ENCODE measurements at regions of chr14 and their contacts with region 1.

Region 1: DNA sequence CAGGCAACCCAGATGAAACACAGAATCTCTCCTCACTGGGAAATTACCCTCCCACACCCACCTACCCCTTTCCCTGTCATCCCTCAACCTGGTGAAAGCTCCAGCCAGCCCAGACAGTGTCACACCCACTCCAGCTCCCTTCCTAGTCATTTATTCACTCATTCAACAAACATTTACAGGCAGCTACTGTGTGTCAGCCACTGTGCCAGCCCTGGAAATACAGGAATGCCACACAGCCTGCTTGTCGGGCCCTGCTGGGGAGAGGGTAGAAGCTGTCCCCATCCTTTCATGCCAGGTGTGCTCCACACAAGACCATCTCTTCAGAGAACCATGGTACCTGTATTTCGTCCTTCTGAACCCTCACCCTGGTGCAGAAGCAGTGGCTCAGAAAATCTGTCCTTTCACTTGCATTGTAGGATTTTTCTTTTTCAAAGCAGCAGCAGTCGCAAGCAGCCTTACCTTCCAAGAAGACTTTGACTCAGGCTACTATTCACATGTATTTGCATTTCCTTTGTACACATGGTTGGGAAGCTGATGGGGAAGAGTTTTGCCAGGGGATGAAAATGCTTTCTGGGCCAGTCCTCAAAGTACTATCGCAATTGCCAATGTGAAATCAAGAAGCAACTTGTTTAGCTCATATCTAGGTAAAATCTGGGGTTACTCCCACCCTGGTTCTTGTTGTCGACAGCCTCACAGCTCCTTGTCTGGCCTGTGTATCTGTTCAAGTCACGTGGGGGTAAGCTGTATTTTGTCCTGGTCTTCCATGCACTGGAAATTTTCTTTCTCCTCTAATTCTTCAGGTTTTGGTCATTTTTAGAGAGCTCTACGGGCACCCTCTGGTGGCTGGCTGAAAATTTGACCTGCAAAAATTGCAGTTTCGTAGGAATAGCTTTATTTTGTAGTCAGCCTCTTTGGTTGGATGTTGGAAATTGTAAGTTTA is 147.4 kb upstream of the EGLN3 start:
- DNase-seq: no peak
- ATAC-seq: peak; percentile 48

Region 2: GRCh38 chr14:33542338-33543287 is 555.7 kb before region 1 on chr14:
- intact Hi-C with region 1: no loop called
- DNase-seq: no peak
- ATAC-seq: no peak

Region 3: GRCh38 chr14:33848706-33849454 is 249.4 kb before region 1 on chr14:
- intact Hi-C with region 1: loop called (anchors 1 kb)
- DNase-seq: no peak
- ATAC-seq: peak; percentile 91

Region 4: GRCh38 chr14:34129927-34130552 is 31.7 kb after region 1 on chr14:
- intact Hi-C with region 1: no loop called
- DNase-seq: no peak
- ATAC-seq: no peak

Region 5: GRCh38 chr14:34300882-34301734 is 202.8 kb after region 1 on chr14:
- intact Hi-C with region 1: loop called (anchors 10 kb)
- DNase-seq: no peak
- ATAC-seq: peak; percentile 43